ENCODE measurements at regions of chr20 and their contacts with region 1.

Region 1: GRCh38 chr20:64119681-64120341 is 12.4 kb upstream of the NPBWR2 start:
- DNase-seq: peak in 1 of 2 donors; percentile 41
- ATAC-seq: peak; percentile 9 to 36 (median 16)
- H3K4me3 ChIP-seq: peak overlapping the region; percentile 18
- H3K27ac ChIP-seq: no peak overlapping the region
- H3K4me1 ChIP-seq: no peaks in the 10 kb centered on the region
- H3K27me3 ChIP-seq: peaks cover 0 to 27% (median 3%) of the 10 kb centered on the region in 3 donors
- CTCF ChIP-seq: no peak

Region 2: DNA sequence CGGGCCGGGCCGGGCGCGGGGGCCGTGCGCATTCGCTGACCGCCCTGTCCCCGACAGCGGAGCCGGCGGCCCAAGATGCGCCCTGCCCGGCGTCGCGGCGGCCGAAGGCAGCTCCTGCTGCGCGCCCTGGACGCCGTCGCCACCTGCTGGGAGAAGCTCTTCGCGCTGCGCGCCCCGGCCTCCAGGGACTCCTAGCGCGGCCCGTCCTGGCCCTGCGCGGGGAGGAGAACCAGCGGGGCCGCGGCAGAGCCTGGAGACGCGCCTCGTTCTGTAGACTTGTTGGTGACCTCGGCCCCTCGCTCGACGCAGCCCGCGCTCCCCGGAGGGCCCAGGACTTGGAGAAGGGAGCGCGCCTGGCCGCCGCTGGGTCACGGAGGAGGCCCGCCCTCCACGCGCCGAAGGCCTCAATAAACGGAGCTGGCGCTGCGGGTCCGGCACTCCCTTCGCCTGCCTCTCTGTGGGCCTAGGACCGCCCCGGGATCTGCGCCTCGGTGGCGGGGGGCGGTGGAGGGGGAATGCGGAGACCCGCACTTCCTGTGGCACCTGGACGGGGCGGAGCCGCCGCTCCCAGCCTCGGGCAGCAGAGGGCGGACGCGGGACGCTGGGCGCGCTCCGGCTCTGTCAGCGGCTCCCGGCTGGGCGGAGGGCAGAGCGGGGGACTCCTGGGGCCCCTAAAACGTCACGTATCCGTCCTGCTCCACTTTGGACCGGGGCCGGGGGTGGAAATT is 81.1 kb before region 1 on chr20:
- intact Hi-C with region 1: loop called (anchors 1 to 5 kb)
- DNase-seq: peak; percentile 73 to 85
- ATAC-seq: peak; percentile 81 to 88 (median 84)
- H3K4me3 ChIP-seq: peak overlapping the region; percentile 67
- H3K27ac ChIP-seq: peak overlapping the region; percentile 67
- H3K4me1 ChIP-seq: peaks cover 10% of the 10 kb centered on the region
- H3K27me3 ChIP-seq: peaks cover 0 to 71% (median 21%) of the 10 kb centered on the region in 3 donors
- CTCF ChIP-seq: peak; percentile 60

Region 3: DNA sequence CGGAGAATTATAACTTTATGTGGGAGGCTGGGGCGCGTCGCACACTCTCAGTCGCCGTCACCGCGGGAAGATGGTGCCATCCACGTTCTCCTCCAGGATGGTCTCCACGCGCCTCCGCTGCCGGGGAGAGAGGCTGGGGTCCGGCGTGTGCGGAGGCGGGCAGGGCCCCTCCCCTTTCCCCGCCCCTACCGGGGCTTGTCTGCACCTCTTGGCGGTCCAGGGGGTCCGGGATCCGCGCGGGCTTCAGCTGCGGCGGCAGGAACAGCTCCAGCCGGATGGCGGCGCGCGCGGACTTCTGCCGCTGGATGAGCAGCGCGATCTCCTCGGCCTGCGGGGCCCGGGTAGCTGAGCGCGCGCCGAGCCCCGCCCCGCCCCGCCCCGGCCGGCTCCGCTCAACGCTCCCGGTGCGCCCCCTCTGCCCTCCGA is 36.4 kb before region 1 on chr20:
- intact Hi-C with region 1: loop called in 1 of 2 experiments (anchors 2 kb)
- DNase-seq: peak; percentile 73 to 82
- ATAC-seq: peak; percentile 58 to 80 (median 74)
- H3K4me3 ChIP-seq: peak overlapping the region; percentile 67
- H3K27ac ChIP-seq: no peak overlapping the region
- H3K4me1 ChIP-seq: peaks cover 20% of the 10 kb centered on the region
- H3K27me3 ChIP-seq: peaks cover 0 to 54% (median 17%) of the 10 kb centered on the region in 3 donors
- CTCF ChIP-seq: peak; percentile 67